ENCODE measurements at regions of chr1 and their contacts with region 1.

Region 1: GRCh38 chr1:62337706-62338631 is 18.7 kb upstream of the KANK4 start:
- DNase-seq: no peak
- H3K4me3 ChIP-seq: no peak overlapping the region
- H3K27ac ChIP-seq: no peak overlapping the region
- H3K4me1 ChIP-seq: peaks cover 19% of the 10 kb centered on the region
- H3K27me3 ChIP-seq: no peaks in the 10 kb centered on the region
- CTCF ChIP-seq: peak in 1 of 2 donors; percentile 17

Region 2: GRCh38 chr1:62318756-62319544 is 19.0 kb before region 1 on chr1 and contains the start of gene KANK4:
- CTCF ChIA-PET with region 1: no interaction called
- dilution Hi-C with region 1: no loop called
- in situ Hi-C with region 1: no loop called
- intact Hi-C with region 1: loop called (anchors 2 kb)
- DNase-seq: no peak
- H3K4me3 ChIP-seq: peak within 1 kb of the TSS; percentile 45 to 64 (median 61)
- H3K27ac ChIP-seq: no peak within 1 kb of the TSS
- H3K4me1 ChIP-seq: peaks cover 17% of the 10 kb centered on the region
- H3K27me3 ChIP-seq: no peaks in the 10 kb centered on the region
- CTCF ChIP-seq: no peak
- total RNA-seq, gene KANK4: 4.5 to 32.2 TPM

Region 3: GRCh38 chr1:62325081-62325480 is 12.9 kb before region 1 on chr1:
- CTCF ChIA-PET with region 1: no interaction called
- dilution Hi-C with region 1: no loop called
- in situ Hi-C with region 1: no loop called
- intact Hi-C with region 1: loop called (anchors 1 kb)
- DNase-seq: peak; percentile 94
- H3K4me3 ChIP-seq: peak overlapping the region in 1 of 3 experiments; percentile 29
- H3K27ac ChIP-seq: peak overlapping the region; percentile 86
- H3K4me1 ChIP-seq: peaks cover 32% of the 10 kb centered on the region
- H3K27me3 ChIP-seq: no peaks in the 10 kb centered on the region
- CTCF ChIP-seq: no peak

Measured in mammary epithelial cell (primary cell).